ENCODE measurements at regions of chr2 and their contacts with region 1.

Region 1: GRCh38 chr2:147319291-147319690 is 525.5 kb upstream of the ACVR2A start:
- DNase-seq: no peak
- H3K4me3 ChIP-seq: no peak overlapping the region
- H3K27ac ChIP-seq: no peak overlapping the region
- H3K4me1 ChIP-seq: no peaks in the 10 kb centered on the region
- H3K27me3 ChIP-seq: no peaks in the 10 kb centered on the region
- CTCF ChIP-seq: no peak
- POLR2A ChIP-seq: no peak

Region 2: DNA sequence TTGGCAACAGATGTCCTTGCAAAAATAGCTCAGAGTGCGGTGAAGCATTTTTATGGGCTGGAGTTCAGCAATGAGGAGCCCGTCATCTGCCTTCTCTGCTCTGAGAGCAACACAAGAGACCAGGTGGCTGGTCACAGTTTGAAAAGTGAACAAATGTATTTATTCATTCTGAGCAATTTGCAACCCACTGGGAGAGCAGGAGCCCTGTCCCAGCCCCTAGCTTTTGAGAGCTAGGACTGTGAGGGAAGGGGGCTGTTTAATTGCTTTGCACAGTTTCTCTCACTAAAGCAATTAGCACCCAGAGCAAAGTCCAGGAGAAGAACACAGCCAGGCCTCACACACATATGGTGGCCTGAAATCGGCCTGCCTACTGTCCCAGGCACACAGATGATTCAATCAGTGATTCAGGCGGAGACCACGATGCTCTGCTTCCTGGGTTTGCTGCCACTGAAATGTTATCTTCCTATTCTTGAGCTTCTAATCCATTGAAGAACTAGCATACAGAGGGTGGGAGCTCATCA is 120.6 kb before region 1 on chr2:
- intact Hi-C with region 1: no loop called
- DNase-seq: no peak
- H3K4me3 ChIP-seq: no peak overlapping the region
- H3K27ac ChIP-seq: no peak overlapping the region
- H3K4me1 ChIP-seq: no peaks in the 10 kb centered on the region
- H3K27me3 ChIP-seq: no peaks in the 10 kb centered on the region
- CTCF ChIP-seq: no peak
- POLR2A ChIP-seq: no peak

Region 3: DNA sequence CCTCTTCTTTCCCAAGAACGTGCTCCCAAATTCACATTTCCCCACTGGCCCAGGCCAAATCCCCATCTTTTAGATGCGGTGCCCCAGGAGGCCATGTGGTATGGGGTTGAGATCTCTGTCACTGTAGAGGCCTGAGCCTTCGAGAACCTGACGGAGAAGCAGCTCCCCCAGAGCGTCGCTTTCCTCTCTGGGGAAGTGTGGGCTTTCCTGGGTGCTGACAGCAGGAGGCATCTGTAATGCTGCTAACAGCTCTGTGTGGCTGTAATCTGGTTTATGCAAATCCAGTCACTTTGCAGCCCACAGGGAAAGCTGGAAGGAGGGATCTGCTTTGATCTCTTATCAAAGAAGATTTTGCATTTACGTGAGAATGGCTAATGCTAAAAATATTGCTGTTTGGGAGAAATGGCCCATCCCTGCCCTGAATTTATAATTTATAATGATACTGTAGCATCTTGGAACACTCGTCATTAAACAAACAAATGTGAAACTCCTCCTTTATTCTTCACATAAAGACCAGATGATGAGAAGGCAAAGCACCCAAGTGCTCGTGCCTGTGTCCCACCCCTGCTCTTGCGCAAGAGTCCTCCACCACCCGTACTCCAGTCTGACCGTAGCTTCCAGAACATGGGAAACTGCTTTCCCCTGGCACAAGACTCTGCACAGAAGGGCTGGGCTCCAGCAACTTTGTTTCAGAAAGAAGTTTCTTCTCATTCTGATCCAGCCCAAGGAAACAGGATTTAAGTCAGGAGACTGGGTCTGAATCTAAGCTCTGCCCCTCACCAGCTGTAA is 1215.3 kb after region 1 on chr2:
- intact Hi-C with region 1: loop called (anchors 5 kb)
- DNase-seq: no peak
- H3K4me3 ChIP-seq: no peak overlapping the region
- H3K27ac ChIP-seq: no peak overlapping the region
- H3K4me1 ChIP-seq: no peaks in the 10 kb centered on the region
- H3K27me3 ChIP-seq: no peaks in the 10 kb centered on the region
- CTCF ChIP-seq: no peak
- POLR2A ChIP-seq: no peak

Measured in breast epithelium (tissue), 4 donors.